WTC11 (cell line): ENCODE measurements at regions of chr7 and their contacts with region 1.

Region 1: GRCh38 chr7:20834656-20835055 is 48.0 kb upstream of the SP8 start:
- DNase-seq: no peak
- ATAC-seq: peak; percentile 43; the same call in 1 of the 2 replicates
- H3K4me3 Mint-ChIP-seq: no peak overlapping the region; the same call in 1 of the 2 replicates
- H3K27ac Mint-ChIP-seq: no peak overlapping the region
- H3K4me1 Mint-ChIP-seq: peaks cover 34% of the 10 kb centered on the region
- H3K27me3 Mint-ChIP-seq: no peaks in the 10 kb centered on the region
- CTCF ChIP-seq: peak; percentile 35; the same call in 1 of the 2 replicates

Region 2: GRCh38 chr7:20778063-20778721 is 56.5 kb before region 1 on chr7:
- CTCF ChIA-PET with region 1: interaction called, 14 read pairs
- POLR2A ChIA-PET with region 1: interaction called, 10 read pairs
- DNase-seq: peak; percentile 86
- ATAC-seq: peak; percentile 86
- H3K4me3 Mint-ChIP-seq: peak overlapping the region; percentile 77
- H3K27ac Mint-ChIP-seq: peak overlapping the region; percentile 79
- H3K4me1 Mint-ChIP-seq: peaks cover 79% of the 10 kb centered on the region
- H3K27me3 Mint-ChIP-seq: peaks cover 21% of the 10 kb centered on the region
- CTCF ChIP-seq: peak; percentile 69

Region 3: DNA sequence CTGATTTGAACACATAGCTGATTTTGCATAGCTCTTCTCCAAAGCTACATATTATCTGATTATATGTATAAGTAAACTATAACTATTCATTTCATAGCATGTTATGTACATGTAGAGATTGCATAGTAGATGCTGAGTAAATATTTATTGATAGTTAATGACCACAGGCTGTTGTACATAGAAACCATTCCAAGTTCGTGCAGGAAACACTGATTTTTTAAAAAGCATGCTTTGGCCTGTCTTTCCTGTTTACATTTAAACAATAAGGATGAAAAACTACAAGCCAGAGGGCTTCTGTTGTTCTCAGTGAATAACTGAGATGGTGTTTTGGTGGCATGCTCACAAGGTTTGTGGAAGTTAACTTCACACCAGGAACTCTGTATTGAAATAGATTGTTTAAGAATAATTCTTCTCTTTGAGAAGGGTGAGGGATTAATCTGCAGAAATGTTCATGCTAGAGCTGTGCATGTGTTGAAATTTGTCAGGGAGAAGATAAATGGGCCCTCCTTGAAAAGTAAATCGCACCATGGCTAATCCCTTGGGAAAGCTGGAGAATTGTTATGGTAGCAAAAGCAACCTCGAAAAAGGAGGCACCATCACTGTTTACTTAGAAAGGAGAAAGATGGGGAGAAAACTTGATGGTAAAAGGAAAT is 72.3 kb after region 1 on chr7:
- CTCF ChIA-PET with region 1: no interaction called
- POLR2A ChIA-PET with region 1: no interaction called
- DNase-seq: no peak
- ATAC-seq: no peak
- H3K4me3 Mint-ChIP-seq: no peak overlapping the region
- H3K27ac Mint-ChIP-seq: no peak overlapping the region
- H3K4me1 Mint-ChIP-seq: peaks cover 17% of the 10 kb centered on the region
- H3K27me3 Mint-ChIP-seq: no peaks in the 10 kb centered on the region
- CTCF ChIP-seq: no peak